Breast epithelium (tissue), 4 donors: ENCODE measurements at regions of chr19 and their contacts with region 1.

Region 1: GRCh38 chr19:22735911-22736645 is 47.9 kb downstream of the ZNF99 start:
- DNase-seq: no peak
- H3K4me3 ChIP-seq: no peak overlapping the region
- H3K27ac ChIP-seq: no peak overlapping the region
- H3K4me1 ChIP-seq: no peaks in the 10 kb centered on the region
- H3K27me3 ChIP-seq: no peaks in the 10 kb centered on the region
- CTCF ChIP-seq: no peak
- POLR2A ChIP-seq: no peak

Region 2: DNA sequence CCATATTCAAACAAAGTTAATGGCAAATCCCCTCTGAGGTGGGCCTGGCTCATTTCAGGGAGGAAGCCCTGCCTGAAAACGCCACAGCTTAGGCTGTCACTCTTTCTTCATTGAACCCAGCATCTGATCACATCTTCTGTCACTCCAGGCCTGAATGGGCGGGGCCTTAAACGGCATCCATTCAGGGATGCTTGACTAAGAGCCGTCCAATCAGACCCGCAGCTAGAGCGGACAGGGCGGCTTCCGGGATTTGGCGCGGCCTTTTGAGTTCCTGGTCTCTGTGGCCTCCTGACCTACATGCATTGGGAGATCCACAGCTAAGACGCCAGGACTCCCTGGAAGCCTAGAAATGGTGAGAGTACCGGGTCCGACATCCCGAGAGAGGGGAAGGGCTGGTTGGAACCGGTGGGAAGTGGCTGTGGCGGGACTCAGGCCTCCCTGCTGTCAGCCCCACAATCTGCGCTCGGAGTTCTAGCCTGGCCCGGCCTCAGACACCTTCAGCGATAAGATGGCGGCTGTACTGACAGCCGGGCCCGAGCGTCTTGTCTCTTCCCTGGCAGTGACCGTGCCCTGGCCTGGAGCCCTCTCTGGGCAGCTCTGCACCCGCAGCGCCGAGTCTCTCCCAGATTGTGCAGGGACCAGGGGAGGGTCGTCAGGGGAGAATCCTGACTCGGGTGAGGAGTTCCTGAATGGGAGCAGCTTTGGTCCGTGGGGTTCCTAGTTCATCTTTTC is 96.1 kb after region 1 on chr19 and contains the start of gene ZNF723:
- intact Hi-C with region 1: no loop called
- DNase-seq: no peak
- H3K4me3 ChIP-seq: peak within 1 kb of the TSS in 1 of 3 donors; percentile 8
- H3K27ac ChIP-seq: no peak within 1 kb of the TSS
- H3K4me1 ChIP-seq: no peaks in the 10 kb centered on the region
- H3K27me3 ChIP-seq: no peaks in the 10 kb centered on the region
- CTCF ChIP-seq: no peak
- POLR2A ChIP-seq: no peak
- total RNA-seq, gene ZNF723: not detected

Region 3: DNA sequence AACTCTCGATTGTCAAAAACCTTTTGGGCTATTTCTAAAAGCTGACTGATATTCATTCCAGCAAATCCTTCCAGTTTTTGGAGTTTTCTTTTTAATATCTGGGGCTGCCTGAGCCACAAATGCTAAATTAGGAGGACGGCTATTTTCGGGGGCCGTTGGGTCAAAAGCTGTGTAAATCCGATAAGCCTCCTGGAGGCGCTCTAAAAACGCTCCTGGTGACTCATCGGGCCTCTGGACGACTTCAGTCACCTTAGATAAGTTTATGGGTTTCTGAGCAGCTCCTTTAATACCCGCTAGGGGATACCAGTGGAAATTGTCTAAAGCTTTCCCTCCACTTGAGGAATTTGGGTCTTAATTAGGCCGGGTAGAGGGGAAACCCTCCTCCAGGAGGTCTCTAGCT is 447.2 kb after region 1 on chr19:
- intact Hi-C with region 1: loop called (anchors 5 kb)
- DNase-seq: no peak
- H3K4me3 ChIP-seq: no peak overlapping the region
- H3K27ac ChIP-seq: no peak overlapping the region
- H3K4me1 ChIP-seq: no peaks in the 10 kb centered on the region
- H3K27me3 ChIP-seq: no peaks in the 10 kb centered on the region
- CTCF ChIP-seq: no peak
- POLR2A ChIP-seq: no peak